ENCODE measurements at regions of chr4 and their contacts with region 1.

Region 1: GRCh38 chr4:105471566-105472176 is 2.2 kb downstream of the PPA2 start:
- DNase-seq: peak; percentile 66
- ATAC-seq: peak; percentile 61
- H3K4me3 ChIP-seq: peak overlapping the region; percentile 93
- H3K27ac ChIP-seq: peak overlapping the region; percentile 92
- H3K4me1 ChIP-seq: no peaks in the 10 kb centered on the region
- H3K27me3 ChIP-seq: no peaks in the 10 kb centered on the region
- CTCF ChIP-seq: peak; percentile 71 to 83 (median 74)
- EP300 ChIP-seq: no peak
- POLR2A ChIP-seq: no peak
- RAD21 ChIP-seq: peak; percentile 95

Region 2: DNA sequence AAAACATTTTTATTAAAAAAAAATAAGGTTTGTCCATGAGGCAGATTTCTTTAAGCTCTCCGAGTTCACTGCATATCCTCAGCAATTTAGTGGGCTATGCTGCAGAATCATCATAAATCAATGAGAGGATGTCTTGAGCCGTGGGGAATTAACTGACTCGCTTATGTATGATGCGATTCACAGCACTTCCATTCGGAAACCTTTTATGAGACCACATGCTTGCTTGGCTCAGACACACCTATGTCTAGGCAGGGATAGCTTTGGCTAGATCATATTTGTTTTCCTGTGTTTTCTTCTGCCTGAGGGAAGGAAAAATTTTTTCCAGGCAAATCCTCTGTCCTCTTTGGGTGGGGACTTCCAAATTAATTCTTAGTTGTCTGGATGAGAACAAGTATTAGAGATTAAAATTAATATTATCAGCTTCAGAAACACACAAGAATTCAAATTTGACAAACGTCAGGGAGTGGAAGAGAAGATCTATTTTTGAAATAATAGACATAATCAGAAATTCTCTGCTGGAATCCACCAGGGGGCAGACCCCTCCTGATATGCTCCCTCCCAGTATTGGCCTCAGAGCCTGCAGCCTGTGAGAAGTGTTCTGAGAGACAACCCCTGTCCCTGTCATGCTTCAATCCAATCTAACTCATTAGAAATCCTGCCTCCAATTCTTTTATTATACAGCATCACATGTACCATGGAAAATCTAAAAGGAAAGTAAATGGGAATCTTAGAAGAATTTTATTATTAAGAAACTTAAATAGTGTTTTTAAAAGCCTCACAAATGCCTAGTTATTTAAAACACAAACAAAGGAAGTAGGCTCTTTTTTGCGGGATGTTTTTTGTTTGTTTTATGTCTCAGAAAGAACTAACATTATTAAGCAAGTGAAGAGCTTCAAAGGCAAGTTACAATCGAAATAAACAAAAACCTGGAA is 1406.8 kb before region 1 on chr4:
- CTCF ChIA-PET with region 1: no interaction called
- POLR2A ChIA-PET with region 1: no interaction called
- RAD21 ChIA-PET with region 1: no interaction called
- SMC1A ChIA-PET with region 1: no interaction called
- in situ Hi-C with region 1: loop called (anchors 25 kb)
- intact Hi-C with region 1: loop called (anchors 10 kb)
- DNase-seq: peak; percentile 23
- ATAC-seq: peak; percentile 97
- H3K4me3 ChIP-seq: no peak overlapping the region
- H3K27ac ChIP-seq: no peak overlapping the region
- H3K4me1 ChIP-seq: no peaks in the 10 kb centered on the region
- H3K27me3 ChIP-seq: no peaks in the 10 kb centered on the region
- CTCF ChIP-seq: peak; percentile 56 to 74 (median 58); a peak in 5 of 6 replicates
- EP300 ChIP-seq: no peak
- POLR2A ChIP-seq: no peak
- RAD21 ChIP-seq: peak; percentile 88

Region 3: GRCh38 chr4:104930298-104930697 is 541.4 kb before region 1 on chr4:
- CTCF ChIA-PET with region 1: interaction called, 15 read pairs
- POLR2A ChIA-PET with region 1: interaction called, 3 read pairs
- RAD21 ChIA-PET with region 1: interaction called, 5 read pairs
- SMC1A ChIA-PET with region 1: no interaction called
- in situ Hi-C with region 1: loop called (anchors 10 kb)
- intact Hi-C with region 1: loop called (anchors 1 kb)
- DNase-seq: peak; percentile 51
- ATAC-seq: peak; percentile 54
- H3K4me3 ChIP-seq: no peak overlapping the region; the same call in 1 of the 2 replicates
- H3K27ac ChIP-seq: peak overlapping the region; percentile 62
- H3K4me1 ChIP-seq: peaks cover 14% of the 10 kb centered on the region
- H3K27me3 ChIP-seq: no peaks in the 10 kb centered on the region
- CTCF ChIP-seq: no peak
- EP300 ChIP-seq: no peak
- POLR2A ChIP-seq: no peak
- RAD21 ChIP-seq: no peak

Region 4: GRCh38 chr4:105140684-105141490 is 330.8 kb before region 1 on chr4:
- CTCF ChIA-PET with region 1: interaction called, 51 read pairs
- POLR2A ChIA-PET with region 1: interaction called, 7 read pairs
- RAD21 ChIA-PET with region 1: interaction called, 22 read pairs
- SMC1A ChIA-PET with region 1: interaction called, 41 read pairs
- in situ Hi-C with region 1: loop called (anchors 5 kb)
- intact Hi-C with region 1: loop called (anchors 1 kb)
- DNase-seq: no peak
- ATAC-seq: peak; percentile 59
- H3K4me3 ChIP-seq: no peak overlapping the region
- H3K27ac ChIP-seq: no peak overlapping the region
- H3K4me1 ChIP-seq: no peaks in the 10 kb centered on the region; the same call in none of the 2 replicates
- H3K27me3 ChIP-seq: no peaks in the 10 kb centered on the region
- CTCF ChIP-seq: peak; percentile 51 to 83 (median 60); a peak in 5 of 6 replicates
- EP300 ChIP-seq: no peak
- POLR2A ChIP-seq: no peak
- RAD21 ChIP-seq: peak; percentile 92

Region 5: GRCh38 chr4:105306158-105306781 is 165.4 kb before region 1 on chr4:
- CTCF ChIA-PET with region 1: interaction called, 6 read pairs
- POLR2A ChIA-PET with region 1: interaction called, 5 read pairs
- RAD21 ChIA-PET with region 1: interaction called, 26 read pairs
- SMC1A ChIA-PET with region 1: interaction called, 4 read pairs
- in situ Hi-C with region 1: no loop called
- intact Hi-C with region 1: loop called (anchors 1 kb)
- DNase-seq: peak; percentile 91
- ATAC-seq: peak; percentile 91
- H3K4me3 ChIP-seq: peak overlapping the region; percentile 24; the same call in 1 of the 2 replicates
- H3K27ac ChIP-seq: peak overlapping the region; percentile 86
- H3K4me1 ChIP-seq: peaks cover 14% of the 10 kb centered on the region
- H3K27me3 ChIP-seq: no peaks in the 10 kb centered on the region
- CTCF ChIP-seq: no peak
- EP300 ChIP-seq: peak; percentile 75 to 77; a peak in 3 of 4 replicates
- POLR2A ChIP-seq: peak; percentile 43; the same call in 1 of the 2 replicates
- RAD21 ChIP-seq: 0 out of 2 replicates have a peak, but pooled peaks have one; percentile 3

Region 6: DNA sequence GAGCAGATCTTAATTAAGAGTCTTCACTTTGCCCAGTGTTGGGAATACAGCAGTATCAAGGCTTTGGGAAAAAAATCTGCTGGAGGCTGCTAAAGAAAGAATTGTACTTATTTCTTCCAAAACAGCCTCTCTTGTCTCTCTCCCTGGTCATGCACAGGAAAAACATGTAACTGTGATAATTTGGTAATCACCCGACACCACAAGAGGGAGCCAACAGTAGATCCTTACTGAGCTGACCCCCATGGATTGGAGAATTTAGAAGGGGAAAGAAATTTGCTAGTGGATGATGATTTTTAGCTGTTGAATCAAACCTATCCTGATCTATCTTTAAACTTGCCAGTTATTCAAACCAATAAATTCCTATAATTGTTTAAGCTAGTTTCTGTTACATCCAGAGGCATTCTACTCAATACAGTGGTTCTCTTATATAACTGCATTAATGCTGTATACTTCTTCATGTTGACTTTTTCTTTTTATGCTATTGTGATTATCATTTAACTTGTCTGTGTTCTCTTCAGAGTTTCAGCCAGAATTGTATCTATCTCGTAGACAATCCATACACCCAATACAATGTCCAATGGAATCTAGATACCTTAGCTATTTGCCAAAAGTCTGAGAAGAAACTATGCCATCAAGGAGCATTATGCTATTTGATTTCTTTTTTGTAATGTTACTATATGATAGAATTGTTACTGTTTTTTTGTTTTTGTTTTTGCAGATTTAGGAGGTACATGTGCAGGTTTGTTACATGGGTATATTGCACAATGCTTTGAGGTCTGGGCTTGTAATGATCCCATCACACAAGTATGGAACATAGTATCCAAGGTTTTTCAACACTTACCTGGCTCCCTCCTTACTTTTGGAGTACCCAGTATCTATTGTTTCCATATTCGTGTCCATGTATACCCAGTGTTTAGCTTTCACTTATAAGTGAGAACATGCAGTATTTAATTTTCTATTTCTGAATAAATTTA is 49.4 kb after region 1 on chr4:
- CTCF ChIA-PET with region 1: interaction called, 14 read pairs
- POLR2A ChIA-PET with region 1: no interaction called
- RAD21 ChIA-PET with region 1: interaction called, 10 read pairs
- SMC1A ChIA-PET with region 1: interaction called, 3 read pairs
- in situ Hi-C with region 1: no loop called
- intact Hi-C with region 1: no loop called
- DNase-seq: peak; percentile 15
- ATAC-seq: peak; percentile 95
- H3K4me3 ChIP-seq: no peak overlapping the region
- H3K27ac ChIP-seq: no peak overlapping the region
- H3K4me1 ChIP-seq: no peaks in the 10 kb centered on the region
- H3K27me3 ChIP-seq: no peaks in the 10 kb centered on the region
- CTCF ChIP-seq: peak; percentile 60 to 82 (median 70)
- EP300 ChIP-seq: no peak
- POLR2A ChIP-seq: no peak
- RAD21 ChIP-seq: peak; percentile 96